Caco-2 (cell line): ENCODE measurements at regions of chr6 and their contacts with region 1.

Region 1: DNA sequence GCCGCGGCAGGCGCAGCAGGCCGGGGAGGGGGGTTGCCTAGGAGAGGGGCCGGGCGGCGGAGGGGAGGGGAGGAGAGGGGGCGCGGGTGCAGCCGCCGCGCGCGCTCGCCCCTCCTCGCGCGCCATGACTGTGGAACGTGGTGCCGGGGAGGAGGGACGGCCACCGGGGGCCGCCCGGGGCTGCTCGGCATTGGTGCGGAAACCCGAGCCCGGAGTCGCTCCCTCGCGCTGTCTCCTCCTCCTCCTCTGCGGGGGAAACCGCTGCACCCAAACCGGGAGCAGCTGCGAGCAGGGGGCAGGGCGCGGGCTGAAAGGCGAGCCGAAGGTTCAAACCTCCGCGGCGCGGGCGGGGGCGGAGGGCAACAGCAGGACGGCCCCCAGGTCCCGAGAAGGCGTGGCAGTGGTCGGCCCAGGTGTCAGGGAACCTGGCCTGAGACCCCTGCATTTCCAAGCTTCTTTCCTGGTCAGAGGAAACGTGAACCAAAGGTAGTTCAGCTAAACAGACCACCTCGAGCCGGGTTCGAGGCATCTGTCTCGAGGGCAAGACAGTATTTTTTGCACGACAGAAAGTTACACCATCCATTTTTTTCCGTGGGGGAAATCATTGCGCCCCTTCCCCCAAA is 1.4 kb upstream of the TRERF1 start:
- DNase-seq: peak; percentile 71 to 72
- H3K4me3 ChIP-seq: peak overlapping the region; percentile 79
- H3K4me3 Mint-ChIP-seq: peak overlapping the region; percentile 69
- H3K27ac Mint-ChIP-seq: no peak overlapping the region
- H3K4me1 ChIP-seq: 0 out of 2 replicates have a peak, but pooled peaks cover 3% of the 10 kb centered on the region
- H3K4me1 Mint-ChIP-seq: peaks cover 8% of the 10 kb centered on the region
- H3K27me3 ChIP-seq: no peaks in the 10 kb centered on the region
- H3K27me3 Mint-ChIP-seq: peaks cover 2% of the 10 kb centered on the region
- CTCF ChIP-seq: no peak

Region 2: DNA sequence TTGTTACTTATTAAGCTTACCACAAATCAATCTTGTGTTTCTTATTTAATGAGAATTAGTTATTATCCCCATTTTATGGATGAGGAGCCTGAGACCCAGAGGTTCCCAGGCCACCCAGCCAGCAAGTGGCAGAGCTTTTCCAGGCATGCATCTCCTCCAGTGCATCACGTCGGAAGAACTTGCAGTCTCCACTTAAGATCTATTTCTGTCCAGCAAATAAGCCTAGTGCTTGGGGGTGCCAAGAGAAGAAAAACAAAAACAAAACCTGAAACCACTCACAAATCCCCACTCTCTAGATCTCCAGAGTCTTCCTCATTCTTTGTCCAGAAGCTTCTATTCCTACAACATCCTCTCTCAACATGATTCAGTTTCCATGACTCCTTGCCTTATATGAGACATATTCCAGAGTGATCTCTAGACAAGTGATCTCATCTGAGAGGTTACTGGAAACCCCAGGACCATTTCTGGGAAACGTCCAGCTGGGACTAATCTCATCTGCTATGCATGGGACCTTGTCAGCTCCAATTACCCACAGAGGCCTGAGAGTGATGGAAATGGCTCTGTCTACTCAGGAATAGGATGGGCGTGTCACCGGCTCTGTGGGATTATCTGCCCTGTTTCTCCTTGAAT is 262.5 kb before region 1 on chr6:
- CTCF ChIA-PET with region 1: interaction called, 11 read pairs
- POLR2A ChIA-PET with region 1: no interaction called
- intact Hi-C with region 1: no loop called
- DNase-seq: no peak
- H3K4me3 ChIP-seq: no peak overlapping the region
- H3K4me3 Mint-ChIP-seq: no peak overlapping the region
- H3K27ac Mint-ChIP-seq: no peak overlapping the region
- H3K4me1 ChIP-seq: no peaks in the 10 kb centered on the region
- H3K4me1 Mint-ChIP-seq: no peaks in the 10 kb centered on the region
- H3K27me3 ChIP-seq: no peaks in the 10 kb centered on the region
- H3K27me3 Mint-ChIP-seq: no peaks in the 10 kb centered on the region
- CTCF ChIP-seq: no peak